MCF 10A (cell line): ENCODE measurements at regions of chr1 and their contacts with region 1.

Region 1: DNA sequence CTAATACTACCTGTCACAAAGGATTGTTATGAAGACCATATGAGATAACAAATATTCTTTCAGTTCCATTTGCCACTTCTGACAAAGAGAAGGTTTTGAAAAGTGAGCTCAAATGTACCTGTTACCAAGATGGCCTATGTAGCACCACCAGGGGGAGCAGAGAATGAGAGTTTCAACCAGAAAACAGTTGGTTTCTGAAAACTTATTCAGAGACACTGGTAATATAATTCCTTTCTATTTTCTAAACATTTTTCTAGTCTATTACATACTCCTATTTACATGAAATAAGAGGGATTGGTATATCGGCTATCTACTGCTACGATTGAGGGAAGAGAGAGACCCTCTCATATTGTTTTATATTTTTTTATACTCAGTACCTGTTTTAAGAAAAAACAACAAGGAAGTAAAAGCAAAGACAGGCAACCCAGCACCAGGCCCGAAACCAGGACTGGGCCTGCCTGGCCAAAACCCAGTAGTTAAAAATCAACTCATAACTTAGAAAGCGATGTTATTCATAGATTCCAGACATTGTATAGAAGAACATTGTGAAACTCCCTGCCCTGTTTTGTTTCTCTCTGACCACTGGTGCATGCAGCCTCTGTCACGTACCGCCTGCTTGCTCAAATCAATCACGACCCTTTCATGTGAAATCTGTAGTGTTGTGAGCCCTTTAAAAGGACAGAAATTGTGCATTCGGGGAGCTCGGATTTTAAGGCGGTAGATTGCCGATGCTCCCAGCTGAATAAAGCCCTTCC is 48.3 kb downstream of the IL23R start:
- DNase-seq: peak; percentile 48
- H3K4me3 Mint-ChIP-seq: no peak overlapping the region
- H3K27ac Mint-ChIP-seq: no peak overlapping the region
- H3K4me1 Mint-ChIP-seq: no peaks in the 10 kb centered on the region
- H3K27me3 Mint-ChIP-seq: no peaks in the 10 kb centered on the region
- CTCF ChIP-seq: peak; percentile 66

Region 2: GRCh38 chr1:66996018-66996682 is 218.4 kb before region 1 on chr1:
- CTCF ChIA-PET with region 1: interaction called, 54 read pairs
- POLR2A ChIA-PET with region 1: interaction called, 4 read pairs
- intact Hi-C with region 1: loop called (anchors 1 kb)
- DNase-seq: peak; percentile 73
- H3K4me3 Mint-ChIP-seq: no peak overlapping the region
- H3K27ac Mint-ChIP-seq: no peak overlapping the region
- H3K4me1 Mint-ChIP-seq: no peaks in the 10 kb centered on the region
- H3K27me3 Mint-ChIP-seq: no peaks in the 10 kb centered on the region
- CTCF ChIP-seq: peak; percentile 69

Region 3: GRCh38 chr1:67162957-67163356 is 51.6 kb before region 1 on chr1:
- CTCF ChIA-PET with region 1: interaction called, 22 read pairs
- POLR2A ChIA-PET with region 1: interaction called, 3 read pairs
- intact Hi-C with region 1: no loop called
- DNase-seq: peak; percentile 92
- H3K4me3 Mint-ChIP-seq: no peak overlapping the region
- H3K27ac Mint-ChIP-seq: no peak overlapping the region
- H3K4me1 Mint-ChIP-seq: peaks cover 14% of the 10 kb centered on the region
- H3K27me3 Mint-ChIP-seq: no peaks in the 10 kb centered on the region
- CTCF ChIP-seq: no peak

Region 4: DNA sequence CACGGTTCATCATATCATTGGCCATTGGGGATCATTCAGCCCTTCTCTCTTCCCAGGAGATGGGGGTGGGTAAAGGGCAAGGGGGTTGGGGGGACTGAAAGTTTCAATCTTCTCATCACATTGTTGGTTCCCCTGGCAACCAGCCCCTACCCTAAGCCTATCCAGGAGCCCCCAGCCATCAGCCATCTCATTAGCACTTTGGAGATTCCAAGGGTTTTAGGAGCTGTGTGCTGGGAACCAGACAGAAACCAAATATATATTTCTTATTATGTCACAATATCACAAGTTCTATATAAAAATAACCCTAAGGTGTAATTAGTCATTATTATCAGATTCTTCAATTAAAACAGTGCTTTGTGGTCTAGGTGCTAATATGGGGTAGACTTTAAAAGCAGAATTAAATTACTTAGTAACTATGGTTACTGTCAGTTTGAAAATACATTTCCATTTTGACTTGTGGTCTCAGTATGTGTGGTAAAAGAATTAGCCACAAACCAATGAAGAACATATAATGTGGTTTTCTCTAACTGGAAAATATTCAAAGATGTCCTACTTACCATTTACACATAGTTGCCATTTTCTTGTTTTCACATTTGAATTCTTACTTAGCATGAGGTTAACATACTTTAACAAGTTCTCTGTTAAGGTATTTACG is 20.3 kb before region 1 on chr1:
- CTCF ChIA-PET with region 1: interaction called, 24 read pairs
- POLR2A ChIA-PET with region 1: no interaction called
- intact Hi-C with region 1: no loop called
- DNase-seq: no peak
- H3K4me3 Mint-ChIP-seq: no peak overlapping the region
- H3K27ac Mint-ChIP-seq: no peak overlapping the region
- H3K4me1 Mint-ChIP-seq: no peaks in the 10 kb centered on the region
- H3K27me3 Mint-ChIP-seq: no peaks in the 10 kb centered on the region
- CTCF ChIP-seq: no peak

Region 5: GRCh38 chr1:67227196-67227595 is 12.6 kb after region 1 on chr1:
- CTCF ChIA-PET with region 1: interaction called, 125 read pairs
- POLR2A ChIA-PET with region 1: interaction called, 3 read pairs
- intact Hi-C with region 1: no loop called
- DNase-seq: peak; percentile 59
- H3K4me3 Mint-ChIP-seq: no peak overlapping the region
- H3K27ac Mint-ChIP-seq: no peak overlapping the region
- H3K4me1 Mint-ChIP-seq: peaks cover 12% of the 10 kb centered on the region
- H3K27me3 Mint-ChIP-seq: no peaks in the 10 kb centered on the region
- CTCF ChIP-seq: no peak

Region 6: GRCh38 chr1:67390041-67390887 is 175.7 kb after region 1 on chr1:
- CTCF ChIA-PET with region 1: interaction called, 13 read pairs
- POLR2A ChIA-PET with region 1: no interaction called
- intact Hi-C with region 1: no loop called
- DNase-seq: no peak
- H3K4me3 Mint-ChIP-seq: no peak overlapping the region
- H3K27ac Mint-ChIP-seq: no peak overlapping the region
- H3K4me1 Mint-ChIP-seq: peaks cover 12% of the 10 kb centered on the region
- H3K27me3 Mint-ChIP-seq: no peaks in the 10 kb centered on the region
- CTCF ChIP-seq: no peak

Region 7: DNA sequence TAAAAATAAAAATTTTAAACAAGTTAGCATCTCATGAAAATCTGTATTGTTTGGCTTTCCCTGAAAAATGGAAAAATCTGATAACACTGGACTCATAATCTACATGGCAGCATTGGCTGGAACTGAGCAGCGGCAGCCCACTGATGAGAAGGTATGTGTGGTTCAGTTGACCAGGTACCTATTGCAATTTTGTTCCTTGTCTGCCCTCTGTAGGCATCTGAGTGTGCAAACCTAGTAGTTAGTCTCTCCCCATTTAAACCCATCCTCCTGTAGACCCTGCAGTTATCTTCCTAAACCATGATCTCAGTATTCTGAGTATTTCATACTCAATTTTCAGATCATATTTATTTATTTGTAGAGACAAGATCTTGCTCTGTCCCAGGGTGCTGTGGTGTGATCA is 275.0 kb after region 1 on chr1:
- CTCF ChIA-PET with region 1: interaction called, 98 read pairs
- POLR2A ChIA-PET with region 1: no interaction called
- intact Hi-C with region 1: no loop called
- DNase-seq: peak; percentile 38
- H3K4me3 Mint-ChIP-seq: no peak overlapping the region
- H3K27ac Mint-ChIP-seq: no peak overlapping the region
- H3K4me1 Mint-ChIP-seq: no peaks in the 10 kb centered on the region
- H3K27me3 Mint-ChIP-seq: no peaks in the 10 kb centered on the region
- CTCF ChIP-seq: no peak

Region 8: DNA sequence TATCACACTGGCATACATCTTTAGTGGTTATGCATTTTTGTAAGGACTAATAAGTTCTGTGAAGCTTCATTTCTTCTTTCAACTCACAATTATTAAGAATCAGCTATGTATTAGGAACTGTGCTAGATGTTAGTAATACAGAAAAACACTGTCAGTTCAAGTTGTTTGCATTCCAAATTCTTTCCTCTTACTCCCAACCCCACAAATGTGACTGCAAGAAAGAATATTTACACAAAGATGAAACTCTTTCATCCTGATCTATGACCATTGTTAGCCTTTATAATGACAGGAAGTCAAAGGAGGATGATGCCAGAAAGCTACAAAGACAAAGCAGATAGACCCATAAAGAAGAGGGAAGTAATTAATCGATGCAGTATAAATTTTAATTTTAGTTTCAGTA is 449.5 kb after region 1 on chr1:
- CTCF ChIA-PET with region 1: no interaction called
- POLR2A ChIA-PET with region 1: no interaction called
- intact Hi-C with region 1: no loop called
- DNase-seq: no peak
- H3K4me3 Mint-ChIP-seq: no peak overlapping the region
- H3K27ac Mint-ChIP-seq: no peak overlapping the region
- H3K4me1 Mint-ChIP-seq: no peaks in the 10 kb centered on the region
- H3K27me3 Mint-ChIP-seq: no peaks in the 10 kb centered on the region
- CTCF ChIP-seq: no peak